ENCODE measurements at regions of chr13 and their contacts with region 1.

Region 1: DNA sequence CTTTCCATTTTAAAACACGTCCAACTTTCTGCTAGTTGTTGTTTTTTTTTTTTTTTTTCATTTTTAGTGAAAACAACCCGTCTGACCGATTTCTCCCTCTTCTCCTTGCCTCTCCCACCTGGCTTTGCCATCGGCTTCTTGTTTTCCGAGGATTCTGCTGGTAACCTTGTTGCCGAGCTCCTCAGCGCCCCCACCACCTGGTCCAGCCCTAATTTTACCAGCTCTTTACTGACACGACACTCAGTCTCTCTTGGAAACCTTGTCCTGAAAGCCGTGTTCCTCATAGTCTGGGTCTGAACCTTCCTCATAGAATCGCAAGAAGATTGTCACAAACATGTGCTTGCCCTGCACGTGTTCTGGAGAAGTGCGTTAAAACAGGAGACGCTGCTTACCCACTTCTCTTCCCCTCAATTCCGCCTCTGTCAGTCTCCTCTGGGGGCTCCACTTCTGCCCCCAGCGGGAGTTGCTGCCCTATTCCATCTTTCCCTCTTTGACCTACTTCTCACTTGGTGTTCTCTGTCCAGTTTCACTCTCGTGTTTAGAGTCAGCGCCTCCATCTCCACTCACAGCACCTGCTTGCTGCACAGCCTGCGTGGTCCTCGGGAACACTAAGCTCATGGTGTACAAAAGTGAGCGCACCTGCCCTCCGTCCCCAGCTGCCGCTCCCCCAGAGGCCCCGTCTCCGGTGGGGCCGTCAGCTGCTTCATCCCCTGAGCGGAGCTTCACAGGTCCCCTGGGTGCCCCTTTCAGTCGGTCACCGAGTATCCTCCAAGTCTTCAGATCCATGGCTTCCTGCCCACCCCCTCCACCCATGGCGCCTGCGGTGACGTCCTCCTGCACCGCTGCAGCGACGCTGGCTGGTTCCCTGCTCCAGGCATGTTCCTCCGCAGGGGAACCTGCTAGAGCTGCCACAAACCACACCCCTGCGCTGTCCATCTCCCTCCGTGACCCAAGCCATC is 65.1 kb downstream of the TM9SF2 start:
- DNase-seq: no peak
- ATAC-seq: peak; percentile 14
- H3K4me3 Mint-ChIP-seq: peak overlapping the region; percentile 64
- H3K27ac Mint-ChIP-seq: peak overlapping the region; percentile 37
- H3K4me1 Mint-ChIP-seq: peaks cover 2% of the 10 kb centered on the region
- H3K27me3 Mint-ChIP-seq: no peaks in the 10 kb centered on the region
- CTCF ChIP-seq: no peak

Region 2: DNA sequence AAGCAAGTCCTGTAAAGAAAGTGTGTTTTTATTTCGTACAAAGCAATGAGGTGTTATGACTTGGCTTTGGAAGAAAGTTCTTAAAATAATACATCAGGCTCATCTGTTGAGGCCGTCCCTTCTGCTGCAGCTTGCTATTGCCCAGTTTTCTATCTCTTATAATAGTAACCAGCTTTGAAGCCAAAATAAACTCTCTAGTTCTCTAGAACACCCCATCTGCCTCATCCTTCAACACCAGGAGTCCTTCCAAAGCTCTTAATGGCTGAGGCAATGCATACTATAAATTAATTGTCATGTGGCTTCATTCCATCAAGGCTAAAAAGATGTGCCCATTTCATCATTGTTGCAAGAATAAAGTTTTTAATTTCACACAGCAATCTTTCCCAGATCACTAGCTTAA is 1662.3 kb before region 1 on chr13:
- CTCF ChIA-PET with region 1: no interaction called
- POLR2A ChIA-PET with region 1: no interaction called
- intact Hi-C with region 1: no loop called
- DNase-seq: no peak
- ATAC-seq: no peak
- H3K4me3 Mint-ChIP-seq: no peak overlapping the region
- H3K27ac Mint-ChIP-seq: no peak overlapping the region
- H3K4me1 Mint-ChIP-seq: no peaks in the 10 kb centered on the region
- H3K27me3 Mint-ChIP-seq: peaks cover 17% of the 10 kb centered on the region
- CTCF ChIP-seq: no peak

Region 3: GRCh38 chr13:99542788-99543406 is 23.5 kb before region 1 on chr13:
- CTCF ChIA-PET with region 1: no interaction called
- POLR2A ChIA-PET with region 1: no interaction called
- intact Hi-C with region 1: loop called (anchors 2 kb)
- DNase-seq: peak; percentile 61
- ATAC-seq: peak; percentile 94
- H3K4me3 Mint-ChIP-seq: peak overlapping the region; percentile 53
- H3K27ac Mint-ChIP-seq: peak overlapping the region; percentile 84
- H3K4me1 Mint-ChIP-seq: peaks cover 67% of the 10 kb centered on the region
- H3K27me3 Mint-ChIP-seq: no peaks in the 10 kb centered on the region
- CTCF ChIP-seq: no peak

Region 4: DNA sequence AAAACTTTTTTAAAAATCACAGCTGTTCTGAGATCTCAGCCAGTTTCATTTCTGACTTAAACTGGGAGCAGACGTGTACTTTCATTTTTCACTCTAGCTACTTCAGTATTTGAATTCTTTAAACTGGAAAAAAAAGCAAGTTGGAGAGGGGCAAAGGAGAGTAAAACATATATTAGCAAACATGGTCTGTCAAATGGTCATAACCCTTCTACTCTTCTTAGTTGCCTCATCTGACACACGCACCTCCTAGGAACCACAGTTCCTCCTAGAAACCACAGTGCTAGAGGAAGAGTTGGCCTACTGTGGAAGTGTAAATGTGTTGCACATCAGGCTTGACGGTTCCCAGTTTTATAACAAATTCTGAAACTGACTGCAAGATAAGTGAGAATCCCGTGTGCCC is 18.0 kb before region 1 on chr13:
- CTCF ChIA-PET with region 1: no interaction called
- POLR2A ChIA-PET with region 1: no interaction called
- intact Hi-C with region 1: loop called (anchors 2 kb)
- DNase-seq: no peak
- ATAC-seq: no peak
- H3K4me3 Mint-ChIP-seq: peak overlapping the region; percentile 25
- H3K27ac Mint-ChIP-seq: peak overlapping the region; percentile 86
- H3K4me1 Mint-ChIP-seq: peaks cover 69% of the 10 kb centered on the region
- H3K27me3 Mint-ChIP-seq: no peaks in the 10 kb centered on the region
- CTCF ChIP-seq: no peak

Measured in activated B cell treated with CpG ODN at 0.5 μM for 24 hours (primary cell).